Dorsolateral prefrontal cortex (tissue), 120 donors: ENCODE measurements at regions of chr2 and their contacts with region 1.

Region 1: GRCh38 chr2:130181325-130181879 is at the start of gene SMPD4:
- DNase-seq: peak; percentile 92 to 97 (median 96)
- H3K4me3 ChIP-seq: peak within 1 kb of the TSS; percentile 70 to 100 (median 95)
- H3K27ac ChIP-seq: peak within 1 kb of the TSS; percentile 76 to 99 (median 95)
- H3K27me3 ChIP-seq: no peaks in the 10 kb centered on the region
- CTCF ChIP-seq: peak in 2 of 56 donors; percentile 22 to 60
- total RNA-seq, gene SMPD4: 34.2 to 73.8 (median 51.8) TPM

Region 2: DNA sequence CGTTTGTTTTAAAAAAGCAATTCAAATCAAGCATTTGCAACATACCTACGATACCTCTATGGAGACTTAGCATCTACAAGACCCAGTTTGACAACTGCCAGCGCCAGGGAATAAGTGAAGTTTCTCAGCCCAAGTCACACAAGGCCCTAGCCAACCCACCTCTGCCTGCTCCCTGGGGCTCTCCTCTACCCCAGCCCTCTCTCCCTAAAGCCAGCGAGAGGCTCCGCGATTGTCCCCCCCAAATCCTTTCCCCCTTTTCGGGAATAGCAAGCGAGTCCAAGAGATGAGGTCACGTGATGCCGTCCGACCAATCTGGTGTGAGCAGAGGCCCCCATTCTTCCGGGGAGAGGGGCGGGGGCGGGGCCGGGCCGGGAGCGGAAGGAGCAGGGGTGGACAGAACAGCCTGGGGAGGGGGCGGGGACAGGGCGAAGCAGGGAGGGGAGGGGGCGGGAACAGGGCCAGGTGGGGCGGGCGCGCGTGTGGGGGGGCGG is 304.1 kb before region 1 on chr2:
- intact Hi-C with region 1: loop called in 1 of 2 experiments (anchors 5 kb)
- DNase-seq: peak; percentile 88 to 95 (median 94)
- H3K4me3 ChIP-seq: peak overlapping the region; percentile 53 to 95 (median 77)
- H3K27ac ChIP-seq: peak overlapping the region; percentile 27 to 96 (median 86)
- H3K27me3 ChIP-seq: no peaks in the 10 kb centered on the region
- CTCF ChIP-seq: peak in 1 of 56 donors; percentile 10

Region 3: GRCh38 chr2:129923265-129924091 is 257.9 kb before region 1 on chr2:
- intact Hi-C with region 1: loop called in 1 of 2 experiments (anchors 5 kb)
- DNase-seq: peak in 1 of 10 donors; percentile 60
- H3K4me3 ChIP-seq: peak overlapping the region; percentile 11 to 65 (median 44)
- H3K27ac ChIP-seq: peak overlapping the region in 7 of 59 donors; percentile 6 to 68 (median 36)
- H3K27me3 ChIP-seq: peaks cover 0 to 12% (median 0%) of the 10 kb centered on the region in 45 donors
- CTCF ChIP-seq: peak; percentile 39 to 78 (median 62)

Region 4: DNA sequence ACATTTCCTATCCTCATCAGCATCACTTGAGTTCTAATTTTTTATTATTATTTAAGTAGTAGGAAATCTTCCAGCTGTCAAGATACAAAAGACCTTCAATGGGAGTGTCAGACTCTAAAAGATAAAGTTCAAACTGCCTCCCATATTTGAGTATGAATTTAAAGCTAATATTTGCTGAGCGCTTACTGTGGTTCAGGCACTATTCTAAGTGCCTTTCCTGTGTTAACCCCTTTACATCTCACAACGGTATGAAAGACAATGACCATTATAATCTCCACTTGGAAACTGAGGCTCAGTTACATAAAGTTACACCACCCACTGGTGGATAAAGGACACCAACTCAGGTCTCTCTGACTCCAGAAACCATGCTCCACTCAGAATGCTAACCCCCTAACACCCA is 162.0 kb before region 1 on chr2:
- intact Hi-C with region 1: no loop called
- DNase-seq: no peak
- H3K4me3 ChIP-seq: no peak overlapping the region
- H3K27ac ChIP-seq: no peak overlapping the region
- H3K27me3 ChIP-seq: peaks cover 0 to 9% (median 0%) of the 10 kb centered on the region in 45 donors
- CTCF ChIP-seq: no peak

Region 5: DNA sequence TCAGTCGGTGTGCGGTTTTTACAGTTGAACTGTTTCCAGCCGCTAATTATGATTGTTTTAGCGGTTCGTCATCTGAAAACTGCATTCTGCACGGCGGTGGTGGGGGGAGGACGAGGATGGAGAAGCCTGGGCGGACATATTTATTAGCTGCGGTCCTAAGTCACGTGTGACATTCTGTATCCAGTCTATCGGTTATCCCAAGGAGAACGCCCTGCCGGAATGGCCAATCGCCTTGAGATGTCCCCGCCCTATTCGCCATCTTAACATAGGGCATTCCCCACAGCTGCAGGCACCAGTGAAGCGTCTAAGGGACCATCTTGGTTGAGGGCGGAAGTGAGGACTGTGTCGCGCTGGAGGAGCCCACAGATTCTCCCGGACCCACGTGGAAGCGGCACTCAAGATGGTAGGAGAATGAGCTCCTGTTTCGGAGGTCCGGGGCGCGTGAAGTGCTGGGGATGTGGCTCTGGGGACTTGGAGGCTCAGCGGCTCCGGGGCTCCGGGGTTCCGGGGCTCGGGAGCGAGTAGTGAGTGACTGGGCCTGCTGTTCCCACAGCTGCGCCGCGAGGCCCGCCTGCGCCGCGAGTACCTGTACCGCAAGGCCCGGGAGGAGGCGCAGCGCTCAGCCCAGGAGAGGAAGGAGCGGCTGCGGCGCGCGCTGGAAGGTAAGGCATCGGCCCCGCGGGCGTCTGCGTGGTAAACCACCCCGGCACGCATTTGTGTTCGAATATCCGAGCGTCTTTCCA is 161.3 kb after region 1 on chr2 and contains the start of gene IMP4:
- intact Hi-C with region 1: loop called (anchors 1 to 5 kb)
- DNase-seq: peak; percentile 91 to 100 (median 99)
- H3K4me3 ChIP-seq: peak within 1 kb of the TSS; percentile 69 to 100 (median 94)
- H3K27ac ChIP-seq: peak within 1 kb of the TSS; percentile 72 to 99 (median 96)
- H3K27me3 ChIP-seq: no peaks in the 10 kb centered on the region
- CTCF ChIP-seq: peak in 36 of 56 donors; percentile 2 to 49 (median 24)
- total RNA-seq, gene IMP4: 46.3 to 91.5 (median 67.1) TPM